ENCODE measurements at regions of chr17 and their contacts with region 1.

Region 1: GRCh38 chr17:41548844-41549595 is 20.9 kb upstream of the KRT19 start:
- DNase-seq: peak; percentile 77
- H3K4me3 Mint-ChIP-seq: peak overlapping the region; percentile 18
- H3K27ac Mint-ChIP-seq: peak overlapping the region; percentile 84
- H3K4me1 Mint-ChIP-seq: peaks cover 21% of the 10 kb centered on the region
- H3K27me3 Mint-ChIP-seq: peaks cover 2% of the 10 kb centered on the region

Region 2: DNA sequence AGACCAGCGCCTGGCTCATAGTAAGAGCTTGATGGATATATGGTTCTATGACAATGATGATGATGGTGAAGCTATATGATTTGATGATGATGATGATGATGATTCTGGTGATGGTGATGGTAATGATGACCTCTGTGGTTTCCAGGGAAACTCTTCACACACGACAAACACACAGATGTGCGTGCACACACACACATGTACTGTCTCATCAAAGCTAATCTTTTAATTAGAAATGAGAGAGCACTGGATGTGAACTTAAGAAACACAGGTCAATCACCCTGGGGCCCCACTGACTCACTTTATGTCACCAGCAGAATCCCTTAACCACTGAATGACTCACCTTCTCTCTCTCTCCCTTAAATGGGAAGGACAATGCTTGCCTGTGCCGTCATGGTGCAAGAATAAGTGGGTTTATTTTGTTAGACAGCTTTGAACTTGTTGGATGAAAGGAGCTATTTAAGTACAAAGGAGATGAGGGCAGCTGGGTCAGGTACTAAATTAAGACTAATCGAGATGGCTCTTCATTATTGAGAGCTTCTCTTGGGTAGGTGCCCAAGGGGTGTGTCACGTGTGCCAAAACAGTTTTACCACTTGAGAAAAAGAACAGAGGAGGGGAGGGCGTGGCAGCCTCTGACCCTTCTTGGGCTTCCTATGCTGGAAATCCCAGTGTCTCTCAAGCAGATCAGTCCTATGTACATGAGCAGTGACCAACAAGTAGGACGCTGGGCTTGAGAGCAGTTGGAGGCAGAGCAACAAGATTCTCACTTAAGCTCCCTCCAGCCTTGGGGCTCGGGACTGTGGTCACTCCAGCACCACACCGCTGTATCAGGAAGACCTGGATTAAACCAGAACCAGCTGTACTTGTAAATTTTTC is 145.0 kb before region 1 on chr17:
- intact Hi-C with region 1: loop called (anchors 10 kb)
- DNase-seq: no peak
- H3K4me3 Mint-ChIP-seq: no peak overlapping the region
- H3K27ac Mint-ChIP-seq: peak overlapping the region; percentile 82
- H3K4me1 Mint-ChIP-seq: peaks cover 24% of the 10 kb centered on the region
- H3K27me3 Mint-ChIP-seq: no peaks in the 10 kb centered on the region

Region 3: DNA sequence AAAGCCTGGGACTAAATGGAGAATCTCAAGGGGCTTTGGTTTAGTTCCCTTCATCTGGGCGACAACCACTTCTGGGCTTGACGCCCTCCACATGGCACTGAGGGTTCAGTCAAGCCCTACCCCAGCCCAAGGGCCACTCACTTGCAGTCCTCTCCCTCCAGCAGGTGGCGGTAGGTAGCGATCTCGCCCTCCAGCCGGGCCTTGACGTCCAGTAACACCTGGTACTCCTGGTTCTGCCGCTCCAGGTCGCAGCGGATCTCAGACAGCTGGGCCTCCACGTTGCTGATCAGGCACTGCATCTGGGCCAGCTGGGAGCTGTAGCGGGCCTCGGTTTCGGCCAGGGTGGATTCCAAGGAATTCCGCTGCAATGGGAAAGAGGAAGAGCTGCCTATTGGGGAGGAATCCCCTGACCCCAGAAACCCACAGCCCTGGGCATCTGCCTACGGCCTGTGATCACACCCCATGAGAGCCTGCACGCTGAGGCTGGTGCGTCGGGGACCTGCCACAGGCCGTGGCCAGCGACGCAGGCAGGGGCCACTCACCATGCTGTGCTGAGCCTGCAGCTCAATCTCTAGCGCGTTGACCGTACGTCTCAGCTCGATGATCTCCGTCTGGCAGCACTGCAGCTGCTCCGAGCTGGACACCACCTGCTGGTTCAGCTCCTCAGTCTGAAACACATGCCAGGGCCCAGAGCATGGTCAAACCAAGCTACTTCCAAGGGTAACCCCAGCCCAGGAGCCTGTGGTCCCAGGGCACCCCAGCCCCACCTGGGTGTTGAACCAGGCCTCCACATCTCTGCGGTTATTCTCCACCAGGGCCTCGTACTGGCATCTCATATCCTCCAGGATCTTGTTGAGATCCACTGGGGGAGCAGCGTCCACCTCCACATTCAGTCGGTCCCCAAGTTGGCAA is 62.0 kb before region 1 on chr17:
- intact Hi-C with region 1: loop called (anchors 5 kb)
- DNase-seq: peak; percentile 16
- H3K4me3 Mint-ChIP-seq: no peak overlapping the region
- H3K27ac Mint-ChIP-seq: no peak overlapping the region
- H3K4me1 Mint-ChIP-seq: no peaks in the 10 kb centered on the region
- H3K27me3 Mint-ChIP-seq: no peaks in the 10 kb centered on the region

Region 4: GRCh38 chr17:41500131-41500911 is 48.7 kb before region 1 on chr17:
- intact Hi-C with region 1: no loop called
- DNase-seq: no peak
- H3K4me3 Mint-ChIP-seq: no peak overlapping the region
- H3K27ac Mint-ChIP-seq: no peak overlapping the region
- H3K4me1 Mint-ChIP-seq: peaks cover 7% of the 10 kb centered on the region
- H3K27me3 Mint-ChIP-seq: no peaks in the 10 kb centered on the region

Region 5: GRCh38 chr17:41648411-41649195 is 99.6 kb after region 1 on chr17:
- intact Hi-C with region 1: loop called (anchors 1 kb)
- DNase-seq: peak; percentile 74
- H3K4me3 Mint-ChIP-seq: peak overlapping the region; percentile 51
- H3K27ac Mint-ChIP-seq: peak overlapping the region; percentile 51
- H3K4me1 Mint-ChIP-seq: peaks cover 7% of the 10 kb centered on the region
- H3K27me3 Mint-ChIP-seq: peaks cover 2% of the 10 kb centered on the region